Colonic mucosa (tissue), 4 donors: ENCODE measurements at regions of chr9 and their contacts with region 1.

Region 1: DNA sequence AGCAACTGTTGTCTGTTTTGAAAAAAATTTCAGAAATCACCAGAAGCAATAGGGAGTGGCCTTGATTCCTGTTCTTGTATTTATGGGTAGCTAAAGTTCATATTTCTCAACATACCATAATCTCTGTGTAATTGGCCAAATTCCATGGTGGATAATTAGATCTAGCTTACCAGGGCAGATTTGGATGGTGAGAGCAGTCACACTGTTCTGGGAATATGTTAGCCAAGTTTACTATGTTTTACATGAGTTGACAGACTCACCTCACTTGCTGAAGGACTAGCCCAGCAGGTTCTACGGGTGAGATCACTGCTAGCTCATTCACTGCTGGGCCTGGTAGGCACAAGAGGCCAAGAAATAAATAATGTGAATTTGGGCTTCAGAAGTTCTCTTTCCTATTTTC is 32.7 kb upstream of the CDKN2B start:
- DNase-seq: peak; percentile 91
- H3K4me3 ChIP-seq: no peak overlapping the region
- H3K27ac ChIP-seq: peak overlapping the region; percentile 61
- H3K4me1 ChIP-seq: no peaks in the 10 kb centered on the region
- H3K27me3 ChIP-seq: no peaks in the 10 kb centered on the region
- CTCF ChIP-seq: no peak

Region 2: DNA sequence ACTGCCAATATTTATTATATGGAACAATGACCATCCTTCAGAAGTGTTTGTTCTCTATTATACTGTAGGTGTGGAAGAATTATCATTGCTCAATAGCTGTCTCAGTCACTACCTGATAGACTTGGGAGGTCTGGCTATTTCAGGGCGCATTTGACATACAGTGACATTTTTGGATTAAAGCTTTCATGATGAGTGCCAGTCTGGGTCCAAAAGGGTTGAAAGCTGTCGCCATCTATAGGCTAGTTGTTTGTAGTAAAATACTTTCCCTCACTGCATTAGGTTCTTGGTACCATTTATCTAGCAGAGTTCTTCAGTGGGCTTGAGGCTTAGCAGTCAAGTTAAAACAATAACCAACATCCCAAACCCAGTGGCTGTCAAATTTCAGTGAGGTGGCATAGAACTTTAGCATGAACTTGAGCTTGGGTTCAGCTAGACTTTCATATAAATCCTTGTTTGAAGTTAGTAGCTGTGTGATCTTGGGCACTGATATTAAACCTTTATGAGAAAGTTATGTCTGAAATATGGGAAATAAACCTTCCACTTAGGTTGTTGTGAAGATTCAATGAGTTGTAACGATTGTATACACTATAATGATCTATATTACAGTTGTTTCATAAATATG is 77.9 kb after region 1 on chr9:
- intact Hi-C with region 1: loop called (anchors 10 kb)
- DNase-seq: no peak
- H3K4me3 ChIP-seq: no peak overlapping the region
- H3K27ac ChIP-seq: peak overlapping the region; percentile 71
- H3K4me1 ChIP-seq: no peaks in the 10 kb centered on the region
- H3K27me3 ChIP-seq: no peaks in the 10 kb centered on the region
- CTCF ChIP-seq: peak; percentile 51